ENCODE measurements at regions of chr2 and their contacts with region 1.

Region 1: GRCh38 chr2:229825476-229825875 is 96.3 kb downstream of the TRIP12 start:
- DNase-seq: peak; percentile 30
- H3K4me3 ChIP-seq: no peak overlapping the region
- H3K27ac ChIP-seq: no peak overlapping the region
- H3K4me1 ChIP-seq: peaks cover 22% of the 10 kb centered on the region
- H3K27me3 ChIP-seq: no peaks in the 10 kb centered on the region
- CTCF ChIP-seq: no peak
- POLR2A ChIP-seq: no peak

Region 2: GRCh38 chr2:229838729-229839128 is 13.3 kb after region 1 on chr2:
- CTCF ChIA-PET with region 1: interaction called, 4 read pairs
- POLR2A ChIA-PET with region 1: no interaction called
- dilution Hi-C with region 1: no loop called
- intact Hi-C with region 1: loop called (anchors 2 kb)
- DNase-seq: no peak
- H3K4me3 ChIP-seq: no peak overlapping the region
- H3K27ac ChIP-seq: no peak overlapping the region
- H3K4me1 ChIP-seq: no peaks in the 10 kb centered on the region
- H3K27me3 ChIP-seq: no peaks in the 10 kb centered on the region
- CTCF ChIP-seq: no peak
- POLR2A ChIP-seq: no peak

Measured in endothelial cell of umbilical vein (primary cell).